Dorsolateral prefrontal cortex (tissue), 120 donors: ENCODE measurements at regions of chr10 and their contacts with region 1.

Region 1: GRCh38 chr10:91632671-91633550 is at the start of gene PPP1R3C:
- DNase-seq: peak; percentile 85 to 96 (median 92)
- H3K4me3 ChIP-seq: peak within 1 kb of the TSS; percentile 51 to 93 (median 78)
- H3K27ac ChIP-seq: peak within 1 kb of the TSS in 58 of 59 donors; percentile 27 to 92 (median 78)
- H3K27me3 ChIP-seq: no peaks in the 10 kb centered on the region
- CTCF ChIP-seq: peak in 53 of 56 donors; percentile 12 to 74 (median 46)
- total RNA-seq, gene PPP1R3C: 20.8 to 122 (median 43.9) TPM

Region 2: GRCh38 chr10:91298224-91298871 is 334.6 kb before region 1 on chr10:
- intact Hi-C with region 1: loop called (anchors 2 to 5 kb)
- DNase-seq: peak; percentile 59 to 84 (median 70)
- H3K4me3 ChIP-seq: peak overlapping the region; percentile 29 to 77 (median 57)
- H3K27ac ChIP-seq: peak overlapping the region in 56 of 59 donors; percentile 1 to 88 (median 70)
- H3K27me3 ChIP-seq: no peaks in the 10 kb centered on the region
- CTCF ChIP-seq: peak; percentile 72 to 97 (median 94)

Region 3: DNA sequence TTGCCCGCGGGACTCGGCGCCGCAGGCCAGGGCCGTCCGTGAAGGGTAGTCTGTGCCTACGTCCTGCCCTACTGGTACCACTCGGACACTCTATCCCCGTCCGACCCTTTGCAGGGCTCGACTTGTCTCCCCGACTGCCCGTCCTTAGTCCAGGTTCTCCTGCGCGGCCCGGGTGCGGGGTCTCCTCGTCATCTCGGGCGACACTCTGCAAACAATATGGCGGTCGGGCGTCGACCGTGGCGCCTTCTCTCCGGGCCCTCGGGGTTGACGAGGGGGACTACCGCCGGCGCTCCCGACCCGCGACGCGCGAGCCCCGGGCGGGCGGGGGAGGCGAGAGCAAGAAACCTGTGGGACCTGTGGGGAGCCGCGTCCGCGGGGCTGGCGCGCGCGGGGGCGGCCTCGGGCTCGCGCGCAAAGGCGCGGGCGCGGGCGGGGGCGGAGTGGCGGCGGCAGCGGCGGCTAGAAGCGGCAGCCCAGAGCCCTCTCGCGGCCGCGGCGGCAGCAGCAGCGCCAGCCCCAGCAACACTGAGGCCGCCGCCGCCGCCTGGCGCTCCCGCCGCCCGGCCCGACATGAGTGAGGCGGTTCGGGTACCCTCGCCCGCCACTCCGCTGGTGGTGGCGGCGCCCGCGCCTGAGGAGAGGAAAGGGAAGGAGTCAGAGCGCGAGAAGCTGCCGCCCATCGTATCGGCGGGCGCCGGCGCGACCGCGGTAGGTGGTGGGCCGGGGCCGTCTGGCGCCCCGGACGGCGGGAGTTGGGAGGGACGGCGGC is 222.9 kb before region 1 on chr10 and contains the start of gene HECTD2:
- intact Hi-C with region 1: loop called in 1 of 2 experiments (anchors 2 kb)
- DNase-seq: peak; percentile 40 to 88 (median 75)
- H3K4me3 ChIP-seq: peak within 1 kb of the TSS; percentile 63 to 99 (median 89)
- H3K27ac ChIP-seq: peak within 1 kb of the TSS; percentile 92 to 100 (median 99)
- H3K27me3 ChIP-seq: no peaks in the 10 kb centered on the region
- CTCF ChIP-seq: peak in 48 of 56 donors; percentile 2 to 65 (median 41)
- total RNA-seq, gene HECTD2: 13.3 to 40.3 (median 26.3) TPM

Region 4: DNA sequence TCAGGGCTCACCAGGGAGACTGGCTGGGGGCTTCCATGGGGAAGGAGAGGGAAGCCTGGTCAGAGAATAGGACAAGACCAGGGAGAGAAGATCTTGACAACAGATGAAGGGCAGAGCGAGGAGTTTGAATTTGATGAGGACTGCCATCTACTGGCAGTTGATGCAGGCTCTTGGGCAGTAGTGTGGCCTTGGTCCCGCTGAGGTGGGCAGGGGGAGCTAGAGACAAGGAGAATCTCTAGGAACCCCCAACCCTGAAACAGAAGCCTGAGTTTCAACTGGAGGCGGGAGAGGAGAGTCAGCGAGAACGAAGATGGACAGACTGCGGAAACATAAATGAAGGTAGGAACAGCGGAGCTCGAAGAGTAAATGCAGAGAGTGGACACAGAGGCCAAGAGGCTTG is 81.1 kb before region 1 on chr10:
- intact Hi-C with region 1: loop called in 1 of 2 experiments (anchors 2 kb)
- DNase-seq: peak in 4 of 10 donors; percentile 25 to 52 (median 38)
- H3K4me3 ChIP-seq: peak overlapping the region in 19 of 59 donors; percentile 4 to 47 (median 23)
- H3K27ac ChIP-seq: peak overlapping the region in 24 of 59 donors; percentile 2 to 75 (median 53)
- H3K27me3 ChIP-seq: peaks cover 0 to 5% (median 0%) of the 10 kb centered on the region in 45 donors
- CTCF ChIP-seq: peak; percentile 22 to 77 (median 60)

Region 5: DNA sequence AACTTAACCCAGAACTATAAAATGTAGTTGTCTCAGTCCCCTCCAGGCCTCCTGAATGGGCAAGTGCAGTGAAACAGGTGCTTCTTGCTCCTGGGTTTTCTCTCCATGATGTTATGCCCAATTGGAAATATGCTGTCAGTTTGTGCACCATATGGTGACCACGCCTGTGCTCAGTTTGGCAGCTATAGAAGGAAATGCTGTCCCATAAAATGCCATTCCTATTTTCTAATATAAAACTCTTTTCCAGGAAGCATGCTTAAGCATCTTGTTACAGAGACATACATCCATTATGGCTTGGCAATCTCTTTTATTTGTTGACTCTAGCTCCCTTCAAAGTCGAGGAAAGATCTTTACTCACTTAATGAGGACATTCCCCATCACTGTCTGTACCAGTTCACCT is 231.2 kb after region 1 on chr10:
- intact Hi-C with region 1: no loop called
- DNase-seq: peak in 1 of 10 donors; percentile 44
- H3K4me3 ChIP-seq: no peak overlapping the region
- H3K27ac ChIP-seq: no peak overlapping the region
- H3K27me3 ChIP-seq: no peaks in the 10 kb centered on the region
- CTCF ChIP-seq: no peak

Region 6: DNA sequence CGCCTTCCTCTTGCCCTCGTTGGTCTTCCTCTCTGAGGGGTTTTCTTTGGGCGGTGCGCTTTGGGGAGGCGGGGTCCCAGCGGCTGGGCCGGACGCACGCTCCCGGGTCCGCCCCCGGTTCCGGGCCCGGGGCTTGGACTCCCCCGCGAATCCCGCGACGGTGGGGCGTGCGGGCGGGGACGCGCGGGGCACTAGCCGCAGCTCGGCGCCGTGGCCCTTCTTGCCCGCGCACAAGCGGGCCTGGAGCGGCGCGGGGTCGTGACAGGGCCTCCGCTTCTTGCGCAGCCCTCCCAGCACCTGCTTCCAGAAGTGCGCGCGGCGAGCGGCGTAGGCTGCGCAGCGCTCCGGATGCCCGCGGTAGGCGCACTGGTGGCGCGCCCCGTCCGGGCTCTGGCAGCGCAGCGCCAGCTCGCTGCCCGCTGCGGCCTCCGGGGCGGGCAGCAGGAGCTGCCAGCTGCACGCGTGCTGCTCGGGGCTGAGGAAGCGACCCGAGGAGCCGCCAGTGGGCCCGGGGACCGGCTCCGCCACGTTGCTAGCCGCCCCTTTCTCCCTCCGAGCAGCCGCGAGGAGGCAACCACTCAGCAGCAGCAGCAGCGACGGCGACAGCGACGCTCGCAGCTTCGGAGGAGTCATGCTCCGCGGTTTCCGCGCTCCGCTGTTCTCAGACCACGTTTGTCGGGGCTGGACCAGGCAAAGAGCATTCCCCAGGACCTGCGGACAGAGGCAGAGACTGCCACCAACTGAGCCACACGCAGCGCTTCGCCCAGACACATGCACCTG is 275.6 kb after region 1 on chr10:
- intact Hi-C with region 1: loop called (anchors 1 to 5 kb)
- DNase-seq: peak; percentile 56 to 83 (median 76)
- H3K4me3 ChIP-seq: peak overlapping the region; percentile 56 to 94 (median 80)
- H3K27ac ChIP-seq: peak overlapping the region in 55 of 59 donors; percentile 3 to 88 (median 68)
- H3K27me3 ChIP-seq: no peaks in the 10 kb centered on the region
- CTCF ChIP-seq: peak in 53 of 56 donors; percentile 29 to 68 (median 50)

Region 7: GRCh38 chr10:91974960-91975359 is 342.0 kb after region 1 on chr10:
- intact Hi-C with region 1: no loop called
- DNase-seq: no peak
- H3K4me3 ChIP-seq: no peak overlapping the region
- H3K27ac ChIP-seq: no peak overlapping the region
- H3K27me3 ChIP-seq: no peaks in the 10 kb centered on the region
- CTCF ChIP-seq: no peak

Region 8: DNA sequence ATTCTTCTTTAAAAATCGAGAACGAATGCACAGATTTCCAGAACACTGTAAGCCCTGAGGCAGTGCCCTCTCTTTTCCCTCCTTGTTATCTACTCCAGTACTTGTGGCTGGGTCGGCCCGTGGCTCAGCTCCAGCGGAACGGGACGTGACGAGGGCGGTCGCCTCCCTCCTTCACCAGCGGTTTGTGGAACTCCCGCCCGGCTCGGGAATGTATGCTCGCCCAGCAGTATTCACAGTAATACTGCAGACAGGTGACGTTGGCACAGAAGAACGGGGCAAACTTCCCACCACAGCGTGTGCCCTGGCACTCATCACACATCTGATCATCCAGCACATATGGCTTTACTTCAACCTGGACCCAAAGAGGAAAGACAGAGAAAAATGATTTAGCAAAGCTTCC is 419.2 kb after region 1 on chr10:
- intact Hi-C with region 1: no loop called
- DNase-seq: peak in 3 of 10 donors; percentile 12 to 80 (median 41)
- H3K4me3 ChIP-seq: no peak overlapping the region
- H3K27ac ChIP-seq: no peak overlapping the region
- H3K27me3 ChIP-seq: no peaks in the 10 kb centered on the region
- CTCF ChIP-seq: no peak